Posterior vena cava (tissue), 2 donors: ENCODE measurements at regions of chr2 and their contacts with region 1.

Region 1: GRCh38 chr2:37976411-37976810 is 51.3 kb downstream of the RMDN2 start:
- DNase-seq: no peak

Region 2: DNA sequence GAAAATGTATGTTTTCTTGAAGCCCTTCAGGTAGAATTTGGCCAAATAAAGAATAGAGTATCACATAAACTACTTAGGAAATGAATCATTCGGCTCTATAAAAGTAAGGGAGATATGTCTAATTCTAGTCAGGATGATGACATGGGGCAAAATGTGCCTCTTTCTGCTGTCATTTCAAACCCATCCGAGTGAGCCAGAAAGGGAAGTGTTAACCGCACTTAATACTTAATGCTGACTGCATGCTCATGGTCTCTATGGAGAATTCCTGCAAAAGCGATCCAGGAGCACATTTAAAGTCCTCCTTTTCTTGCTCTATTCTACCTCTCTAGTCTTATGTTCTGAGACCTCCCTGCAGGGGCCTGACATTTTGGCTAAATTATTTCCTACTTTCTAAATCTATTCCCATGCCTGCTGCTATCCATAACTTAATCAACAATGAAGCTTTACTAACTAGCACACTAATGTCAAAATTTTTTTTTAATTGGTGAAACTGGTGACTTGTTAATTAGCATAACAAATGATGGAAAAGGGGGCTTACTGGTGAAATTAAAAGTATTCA is 432.3 kb before region 1 on chr2:
- intact Hi-C with region 1: no loop called
- DNase-seq: no peak

Region 3: GRCh38 chr2:37555457-37555856 is 421.0 kb before region 1 on chr2:
- intact Hi-C with region 1: no loop called
- DNase-seq: peak; percentile 80

Region 4: DNA sequence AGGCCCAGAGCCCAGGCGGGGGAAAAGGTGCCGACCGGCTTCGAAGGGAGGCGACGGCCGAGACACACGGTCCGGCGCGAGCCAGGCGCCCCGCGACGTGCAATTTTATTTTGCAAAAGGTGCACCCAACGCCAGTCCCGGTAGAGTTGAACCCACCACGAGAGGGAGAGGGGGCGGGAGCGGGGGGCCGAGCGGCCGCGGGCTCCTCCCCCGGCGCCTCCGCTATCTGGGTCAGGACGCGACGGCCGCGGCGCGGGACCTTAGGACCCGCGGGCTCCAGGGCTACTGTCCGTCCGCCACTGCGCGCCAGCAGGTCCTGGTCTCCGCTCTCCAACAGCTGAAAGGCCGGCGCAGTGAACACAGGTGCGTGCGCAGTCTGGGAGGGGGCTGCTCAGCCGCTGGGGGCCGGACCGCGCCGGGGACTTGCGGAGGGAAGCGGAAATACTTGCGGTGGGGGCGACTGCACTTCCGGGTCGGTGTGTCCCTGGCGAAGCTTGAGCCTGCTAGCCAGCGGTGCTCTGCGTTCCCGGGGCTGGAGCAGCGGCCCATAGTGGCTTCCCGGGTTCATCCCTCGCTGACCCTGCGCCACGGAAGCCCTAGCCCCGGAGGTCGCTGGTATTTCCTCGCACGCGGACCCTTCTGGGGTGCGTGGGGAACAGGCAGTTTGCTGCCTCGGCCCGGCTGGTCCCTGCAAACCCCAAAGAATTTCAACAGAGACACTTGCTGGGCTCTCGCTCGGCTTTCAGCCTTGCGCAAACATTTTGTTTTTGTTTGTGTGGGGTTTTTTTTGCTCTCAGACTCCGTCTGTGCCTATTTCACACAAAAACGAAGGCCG is 51.1 kb before region 1 on chr2 and contains the start of gene RMDN2:
- intact Hi-C with region 1: no loop called
- DNase-seq: peak; percentile 98
- total RNA-seq, gene RMDN2: 6.4 to 6.6 TPM

Region 5: GRCh38 chr2:38264396-38265281 is 288.2 kb after region 1 on chr2:
- intact Hi-C with region 1: loop called in 1 of 2 experiments (anchors 5 kb)
- DNase-seq: no peak